Calu3 (cell line): ENCODE measurements at regions of chr11 and their contacts with region 1.

Region 1: DNA sequence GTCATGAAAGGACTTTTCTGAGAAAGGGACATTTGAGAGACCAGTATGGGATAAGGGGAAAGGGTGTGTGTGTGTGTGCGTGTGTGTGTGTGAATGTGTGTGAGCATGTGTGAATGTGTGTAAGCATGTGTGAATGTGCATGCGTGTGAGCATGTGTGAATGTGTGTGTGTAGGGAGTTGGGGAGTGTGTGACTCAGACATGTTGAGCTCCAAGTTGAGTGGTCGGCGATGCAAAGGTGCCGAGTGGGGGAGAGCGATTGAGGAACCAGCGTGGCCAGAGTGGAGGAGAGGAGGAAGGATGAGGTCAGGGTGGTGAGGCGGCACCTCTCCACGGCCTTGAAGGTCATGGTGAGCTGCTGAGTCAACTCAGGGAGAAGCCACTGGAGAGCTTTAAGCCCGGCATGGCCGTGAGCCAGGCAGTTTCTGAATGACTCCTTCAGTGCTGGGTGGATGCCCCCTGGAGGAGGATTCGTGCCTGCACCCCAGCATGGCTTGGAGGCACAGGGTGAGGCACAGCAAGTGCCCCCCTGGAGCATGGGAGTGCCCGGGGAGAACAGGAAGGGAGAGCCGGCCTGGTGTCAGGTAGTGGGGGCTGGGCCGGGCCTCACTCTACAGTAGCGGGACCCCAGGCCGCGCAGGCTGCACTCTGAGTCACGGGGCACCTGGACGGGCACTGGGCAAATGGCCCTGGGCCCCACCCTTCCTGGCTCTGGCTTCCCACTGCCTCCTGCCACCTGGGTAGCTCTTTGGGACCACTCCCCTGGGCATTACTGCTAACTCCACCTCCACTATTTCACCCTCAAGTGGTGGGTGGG is 8.2 kb upstream of the CCDC88B start:
- DNase-seq: peak; percentile 84
- H3K4me3 Mint-ChIP-seq: no peak overlapping the region
- H3K27ac Mint-ChIP-seq: no peak overlapping the region
- H3K4me1 Mint-ChIP-seq: peaks cover 24% of the 10 kb centered on the region
- H3K27me3 Mint-ChIP-seq: no peaks in the 10 kb centered on the region
- CTCF ChIP-seq: peak; percentile 62

Region 2: GRCh38 chr11:64060861-64061444 is 270.8 kb before region 1 on chr11:
- CTCF ChIA-PET with region 1: no interaction called
- intact Hi-C with region 1: no loop called
- DNase-seq: peak; percentile 54
- H3K4me3 Mint-ChIP-seq: peak overlapping the region; percentile 24
- H3K27ac Mint-ChIP-seq: no peak overlapping the region
- H3K4me1 Mint-ChIP-seq: no peaks in the 10 kb centered on the region
- H3K27me3 Mint-ChIP-seq: no peaks in the 10 kb centered on the region
- CTCF ChIP-seq: no peak

Region 3: GRCh38 chr11:64152841-64153691 is 178.7 kb before region 1 on chr11:
- CTCF ChIA-PET with region 1: no interaction called
- intact Hi-C with region 1: no loop called
- DNase-seq: peak; percentile 80
- H3K4me3 Mint-ChIP-seq: no peak overlapping the region
- H3K27ac Mint-ChIP-seq: no peak overlapping the region
- H3K4me1 Mint-ChIP-seq: peaks cover 9% of the 10 kb centered on the region
- H3K27me3 Mint-ChIP-seq: no peaks in the 10 kb centered on the region
- CTCF ChIP-seq: peak; percentile 93

Region 4: DNA sequence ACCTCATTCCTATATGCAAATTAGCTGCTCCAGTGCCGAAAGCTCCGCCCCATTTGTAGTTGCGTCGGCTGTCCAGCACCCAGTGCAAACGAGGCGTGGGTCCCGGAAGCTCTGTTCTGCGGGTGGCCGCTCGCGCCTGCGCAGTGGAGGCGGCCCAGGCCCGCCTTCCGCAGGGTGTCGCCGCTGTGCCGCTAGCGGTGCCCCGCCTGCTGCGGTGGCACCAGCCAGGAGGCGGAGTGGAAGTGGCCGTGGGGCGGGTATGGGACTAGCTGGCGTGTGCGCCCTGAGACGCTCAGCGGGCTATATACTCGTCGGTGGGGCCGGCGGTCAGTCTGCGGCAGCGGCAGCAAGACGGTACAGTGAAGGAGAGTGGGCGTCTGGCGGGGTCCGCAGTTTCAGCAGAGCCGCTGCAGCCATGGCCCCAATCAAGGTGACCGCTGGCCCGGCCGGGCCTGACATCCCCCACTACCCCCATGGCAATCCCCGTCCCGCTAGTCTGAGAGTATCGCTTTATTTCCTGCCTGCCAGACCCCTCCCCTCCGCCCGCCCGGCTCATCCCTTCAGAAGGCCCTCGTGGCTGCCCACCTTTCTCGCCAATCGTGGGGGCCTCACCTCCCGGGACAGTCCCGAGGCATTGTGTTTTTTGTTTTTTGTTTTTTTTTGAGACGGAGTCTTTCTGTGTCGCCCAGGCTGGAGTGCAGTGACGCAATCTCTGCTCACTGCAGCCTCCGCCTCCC is 13.6 kb before region 1 on chr11 and contains the start of gene PRDX5:
- CTCF ChIA-PET with region 1: interaction called, 58 read pairs
- intact Hi-C with region 1: no loop called
- DNase-seq: peak; percentile 97
- H3K4me3 Mint-ChIP-seq: peak within 1 kb of the TSS; percentile 98
- H3K27ac Mint-ChIP-seq: peak within 1 kb of the TSS; percentile 99
- H3K4me1 Mint-ChIP-seq: peaks cover 29% of the 10 kb centered on the region
- H3K27me3 Mint-ChIP-seq: no peaks in the 10 kb centered on the region
- CTCF ChIP-seq: no peak
- total RNA-seq, gene PRDX5: 165 TPM in 2 replicates

Region 5: GRCh38 chr11:64341851-64342791 is 10.4 kb after region 1 on chr11:
- CTCF ChIA-PET with region 1: interaction called, 14 read pairs
- intact Hi-C with region 1: no loop called
- DNase-seq: peak; percentile 96
- H3K4me3 Mint-ChIP-seq: peak overlapping the region; percentile 52
- H3K27ac Mint-ChIP-seq: no peak overlapping the region
- H3K4me1 Mint-ChIP-seq: peaks cover 3% of the 10 kb centered on the region
- H3K27me3 Mint-ChIP-seq: no peaks in the 10 kb centered on the region
- CTCF ChIP-seq: peak; percentile 36

Region 6: DNA sequence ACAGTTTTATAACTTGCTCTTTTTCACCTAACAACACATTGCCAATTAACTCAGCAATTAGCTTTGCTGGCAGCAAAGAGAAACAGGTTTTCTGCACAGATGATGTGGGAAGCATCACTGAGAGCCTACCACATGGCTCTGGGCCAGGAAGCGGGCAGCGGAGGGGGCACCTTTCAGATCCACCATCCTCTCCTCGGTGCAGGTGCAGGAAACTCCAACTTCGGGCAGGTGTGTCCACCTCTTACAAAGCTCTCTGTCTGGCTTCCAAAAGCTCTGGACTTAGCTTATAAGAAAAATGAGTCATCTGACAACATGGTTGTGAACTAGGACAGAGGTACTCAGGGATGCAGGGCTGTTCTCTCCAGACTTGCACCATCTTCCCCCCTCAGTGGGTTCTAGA is 104.2 kb after region 1 on chr11:
- CTCF ChIA-PET with region 1: no interaction called
- intact Hi-C with region 1: no loop called
- DNase-seq: no peak
- H3K4me3 Mint-ChIP-seq: no peak overlapping the region
- H3K27ac Mint-ChIP-seq: no peak overlapping the region
- H3K4me1 Mint-ChIP-seq: no peaks in the 10 kb centered on the region
- H3K27me3 Mint-ChIP-seq: peaks cover 90% of the 10 kb centered on the region
- CTCF ChIP-seq: no peak